IMR-90 (cell line): ENCODE measurements at regions of chr2 and their contacts with region 1.

Region 1: GRCh38 chr2:146764301-146764700 is 1080.5 kb upstream of the ACVR2A start:
- DNase-seq: no peak
- ATAC-seq: no peak
- H3K4me3 ChIP-seq: no peak overlapping the region
- H3K27ac ChIP-seq: no peak overlapping the region
- H3K4me1 ChIP-seq: no peaks in the 10 kb centered on the region
- H3K27me3 ChIP-seq: no peaks in the 10 kb centered on the region
- CTCF ChIP-seq: no peak
- POLR2A ChIP-seq: no peak
- RAD21 ChIP-seq: no peak

Region 2: DNA sequence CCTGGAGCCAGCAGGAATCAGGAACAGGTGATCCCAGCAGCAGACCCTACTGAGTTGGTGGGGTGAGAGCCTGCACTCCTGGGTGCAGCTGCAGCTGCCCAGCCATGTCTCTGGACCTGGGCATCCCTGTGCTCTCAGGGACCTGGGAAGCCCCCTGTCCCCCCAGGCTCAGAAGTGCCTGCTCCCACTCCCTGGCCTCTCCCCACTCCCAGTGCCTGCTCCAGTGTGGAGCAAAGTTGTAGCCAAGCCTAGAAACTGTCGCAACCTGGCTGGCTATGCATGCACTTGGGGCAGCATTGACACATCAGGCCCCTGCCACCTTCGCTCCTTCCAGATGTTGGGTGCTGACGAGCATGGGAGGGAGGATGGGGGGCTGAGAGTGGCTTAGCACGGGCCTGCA is 44.1 kb before region 1 on chr2:
- CTCF ChIA-PET with region 1: no interaction called
- POLR2A ChIA-PET with region 1: no interaction called
- dilution Hi-C with region 1: no loop called
- in situ Hi-C with region 1: no loop called
- intact Hi-C with region 1: no loop called
- DNase-seq: no peak
- ATAC-seq: no peak
- H3K4me3 ChIP-seq: no peak overlapping the region
- H3K27ac ChIP-seq: no peak overlapping the region
- H3K4me1 ChIP-seq: no peaks in the 10 kb centered on the region
- H3K27me3 ChIP-seq: no peaks in the 10 kb centered on the region
- CTCF ChIP-seq: no peak
- POLR2A ChIP-seq: no peak
- RAD21 ChIP-seq: no peak

Region 3: GRCh38 chr2:147925886-147926285 is 1161.6 kb after region 1 on chr2:
- CTCF ChIA-PET with region 1: no interaction called
- POLR2A ChIA-PET with region 1: interaction called, 11 read pairs
- dilution Hi-C with region 1: no loop called
- in situ Hi-C with region 1: no loop called
- intact Hi-C with region 1: no loop called
- DNase-seq: peak; percentile 18
- ATAC-seq: no peak
- H3K4me3 ChIP-seq: no peak overlapping the region
- H3K27ac ChIP-seq: no peak overlapping the region
- H3K4me1 ChIP-seq: no peaks in the 10 kb centered on the region
- H3K27me3 ChIP-seq: no peaks in the 10 kb centered on the region
- CTCF ChIP-seq: no peak
- POLR2A ChIP-seq: no peak
- RAD21 ChIP-seq: no peak